Ovary (tissue), 10 donors: ENCODE measurements at regions of chr2 and their contacts with region 1.

Region 1: DNA sequence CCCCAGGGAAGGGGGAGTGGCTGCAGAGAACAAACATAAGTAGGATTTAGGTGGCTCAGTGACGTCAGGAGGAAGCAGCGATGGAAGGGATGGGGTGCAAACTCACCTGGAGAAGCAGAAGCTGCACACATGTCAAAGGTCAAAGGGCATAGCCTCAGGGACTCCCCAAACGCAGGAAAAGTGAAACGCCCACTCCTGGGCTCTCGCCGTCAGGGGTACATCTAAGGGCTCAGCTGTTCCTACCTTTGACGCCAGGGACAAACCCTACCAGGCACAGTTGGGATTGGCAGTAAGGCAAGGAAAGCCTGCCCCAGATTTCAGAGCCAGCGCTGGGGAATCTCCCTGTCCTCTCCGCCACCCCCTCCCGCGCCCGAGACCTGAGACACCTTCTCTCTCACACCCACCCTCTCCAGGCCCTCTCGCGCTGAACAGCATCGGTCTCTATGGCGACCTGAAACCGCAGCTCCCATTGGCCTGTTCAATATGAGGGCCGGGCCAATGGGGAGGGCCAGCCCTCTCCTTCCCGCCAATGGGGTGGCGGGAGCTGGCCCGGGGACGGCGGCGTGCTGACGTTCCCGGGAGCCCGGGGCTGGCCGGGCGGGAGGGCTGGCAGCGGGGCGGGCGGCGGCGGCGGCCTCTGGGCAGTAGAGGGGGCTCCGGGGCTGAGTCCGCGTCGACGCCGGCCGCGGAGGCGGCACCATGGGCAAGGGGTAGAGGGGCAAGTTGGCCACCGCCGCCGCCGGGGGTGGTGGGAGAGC is at the starts of genes CCDC148 and PKP4:
- DNase-seq: peak; percentile 87 to 92 (median 91)
- H3K4me3 ChIP-seq: peak within 1 kb of the TSS; percentile 71
- H3K27ac ChIP-seq: peak within 1 kb of the TSS; percentile 80 to 90
- H3K4me1 ChIP-seq: peaks cover 1% of the 10 kb centered on the region
- H3K27me3 ChIP-seq: no peaks in the 10 kb centered on the region
- CTCF ChIP-seq: peak in 2 of 3 donors; percentile 8 to 32
- EP300 ChIP-seq: no peak
- POLR2A ChIP-seq: peak; percentile 53
- total RNA-seq, gene CCDC148: 2.4 to 6.6 (median 3.6) TPM
- total RNA-seq, gene PKP4: 35.8 to 60.9 (median 46.6) TPM

Region 2: DNA sequence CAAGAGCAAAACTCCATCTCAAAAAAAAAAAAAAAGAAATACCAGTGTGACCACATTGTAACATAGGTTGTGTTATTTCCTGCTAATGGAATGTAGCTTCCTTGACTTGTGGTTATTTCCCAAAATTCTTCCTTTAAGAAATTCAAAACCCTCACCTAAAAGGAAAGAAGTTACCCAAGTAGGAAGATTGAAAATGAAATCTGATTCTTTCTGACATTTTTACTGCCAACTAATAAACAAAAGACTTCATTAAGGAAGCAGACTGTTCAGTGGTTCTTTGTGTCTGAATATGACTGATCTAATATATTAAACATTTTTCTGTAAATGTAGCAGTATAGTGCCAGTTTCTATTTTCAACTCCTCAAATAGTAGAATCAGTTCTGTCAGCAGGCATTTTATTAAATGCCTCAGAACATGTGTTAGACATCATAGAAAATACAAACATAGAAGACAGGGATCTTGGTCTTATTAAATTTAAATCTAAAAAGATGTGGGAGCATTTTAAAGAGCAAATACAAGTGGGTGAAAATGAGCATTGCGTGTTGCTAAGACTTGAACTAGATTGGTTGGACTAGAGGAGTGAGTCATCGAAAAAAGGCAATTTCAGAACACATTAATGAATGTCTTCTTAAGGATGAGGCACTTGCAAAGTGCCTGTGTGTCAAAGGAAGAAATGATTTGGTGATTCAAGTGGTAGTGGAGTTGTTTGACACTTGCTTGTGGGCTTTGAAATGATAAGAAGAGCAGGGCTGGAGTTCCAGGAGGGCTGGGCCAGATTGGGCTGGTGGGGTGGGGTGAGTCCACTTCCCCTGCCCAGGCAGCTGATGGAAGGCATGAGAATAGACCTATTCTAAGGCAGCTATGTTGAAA is 53.7 kb after region 1 on chr2:
- intact Hi-C with region 1: no loop called
- DNase-seq: no peak
- H3K4me3 ChIP-seq: no peak overlapping the region
- H3K27ac ChIP-seq: no peak overlapping the region
- H3K4me1 ChIP-seq: peaks cover 5% of the 10 kb centered on the region
- H3K27me3 ChIP-seq: no peaks in the 10 kb centered on the region
- CTCF ChIP-seq: no peak
- EP300 ChIP-seq: no peak
- POLR2A ChIP-seq: no peak

Region 3: GRCh38 chr2:158667586-158667985 is 211.1 kb after region 1 on chr2:
- intact Hi-C with region 1: loop called in 1 of 4 experiments (anchors 10 kb)
- DNase-seq: no peak
- H3K4me3 ChIP-seq: no peak overlapping the region
- H3K27ac ChIP-seq: peak overlapping the region in 1 of 2 donors; percentile 41
- H3K4me1 ChIP-seq: peaks cover 6% of the 10 kb centered on the region
- H3K27me3 ChIP-seq: no peaks in the 10 kb centered on the region
- CTCF ChIP-seq: no peak
- EP300 ChIP-seq: no peak
- POLR2A ChIP-seq: no peak